ENCODE measurements at regions of chr10 and their contacts with region 1.

Region 1: DNA sequence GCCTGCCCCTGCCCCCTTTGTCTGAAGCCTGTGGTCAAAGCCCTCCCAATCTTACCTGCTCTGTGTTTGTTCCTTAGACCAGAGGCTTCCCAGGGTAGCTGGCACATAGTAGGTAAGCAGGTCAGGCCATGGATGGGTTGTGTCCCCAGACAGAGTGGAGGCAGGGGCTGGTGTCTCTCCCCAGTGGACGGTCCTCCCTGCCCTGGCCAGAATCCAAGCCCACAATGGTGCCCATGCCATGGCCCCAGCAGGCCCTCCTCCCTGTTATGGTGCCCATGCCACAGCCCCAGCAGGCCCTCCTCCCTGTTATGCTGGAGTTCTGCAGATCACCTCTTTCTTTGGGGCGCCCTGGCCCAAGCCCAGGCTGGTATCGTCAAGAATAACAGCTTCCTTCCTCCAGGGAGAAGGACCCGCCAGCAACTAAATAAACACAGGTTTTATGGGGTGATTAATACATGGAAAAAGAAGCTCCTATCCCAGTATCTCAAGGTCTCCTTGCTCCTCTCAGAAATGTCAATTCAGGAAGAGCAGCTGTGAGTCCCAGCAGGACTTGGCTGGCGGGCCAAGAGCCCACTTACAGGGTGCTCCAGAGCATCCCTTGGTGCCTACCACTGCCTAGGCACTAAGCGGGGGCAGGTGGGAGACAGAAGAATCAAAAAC is 82.0 kb downstream of the NEURL1 start:
- DNase-seq: peak; percentile 64
- ATAC-seq: peak; percentile 75
- H3K4me3 ChIP-seq: no peak overlapping the region
- H3K27ac ChIP-seq: no peak overlapping the region
- H3K4me1 ChIP-seq: peaks cover 36% of the 10 kb centered on the region
- H3K27me3 ChIP-seq: no peaks in the 10 kb centered on the region
- CTCF ChIP-seq: no peak

Region 2: GRCh38 chr10:104067525-104067924 is 492.0 kb after region 1 on chr10:
- CTCF ChIA-PET with region 1: no interaction called
- POLR2A ChIA-PET with region 1: interaction called, 29 read pairs
- intact Hi-C with region 1: no loop called
- DNase-seq: no peak
- ATAC-seq: no peak
- H3K4me3 ChIP-seq: no peak overlapping the region
- H3K27ac ChIP-seq: no peak overlapping the region
- H3K4me1 ChIP-seq: no peaks in the 10 kb centered on the region
- H3K27me3 ChIP-seq: no peaks in the 10 kb centered on the region
- CTCF ChIP-seq: no peak

Measured in PC-3 (cell line).